ENCODE measurements at regions of chr6 and their contacts with region 1.

Region 1: DNA sequence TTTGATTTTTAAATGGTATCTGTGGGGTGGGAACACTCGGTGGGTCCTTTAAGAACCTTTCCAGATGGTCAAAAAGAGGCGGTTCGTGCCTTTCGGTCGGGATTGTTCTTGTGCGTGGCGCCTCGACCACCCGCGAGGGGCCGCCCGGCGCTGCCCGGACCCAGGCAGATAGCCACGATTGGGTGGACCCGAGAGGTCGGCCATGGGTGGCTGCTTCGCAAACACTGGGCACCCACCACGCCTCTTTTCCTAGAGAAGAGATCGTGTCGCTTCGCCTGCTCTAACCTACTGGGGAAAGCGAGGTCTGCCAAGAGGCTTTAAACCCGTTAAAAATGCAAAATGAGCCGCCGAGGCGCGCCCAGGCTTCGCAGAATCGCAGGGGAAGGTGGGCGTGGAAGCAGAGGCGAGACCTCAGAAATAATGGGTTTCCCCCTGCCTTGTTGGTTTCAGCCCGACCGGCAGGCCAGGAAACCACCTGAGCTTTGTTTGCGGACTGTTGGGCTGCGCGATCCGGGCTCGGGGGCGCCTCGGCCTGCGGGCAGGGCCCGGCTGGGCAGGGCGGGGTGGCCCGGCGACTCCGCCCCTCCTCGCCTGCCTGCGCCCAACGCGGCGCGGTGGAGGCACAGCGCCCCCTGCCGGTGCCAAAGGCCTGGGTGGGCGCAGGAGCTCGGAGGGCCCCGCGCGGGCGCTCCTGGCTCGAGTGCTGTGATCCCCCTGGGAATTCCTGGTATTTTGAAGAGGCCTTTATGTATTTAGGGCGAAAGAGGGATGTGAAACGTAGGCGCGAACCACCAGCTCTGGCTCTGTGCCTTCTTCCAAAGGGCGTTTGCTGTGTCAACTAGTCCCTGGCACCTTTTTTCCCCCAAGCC is 1.6 kb downstream of the MARCKS start:
- DNase-seq: peak; percentile 95
- H3K4me3 ChIP-seq: peak overlapping the region; percentile 98 to 99 (median 99)
- H3K27ac ChIP-seq: peak overlapping the region; percentile 99
- H3K4me1 ChIP-seq: peaks cover 16% of the 10 kb centered on the region
- H3K27me3 ChIP-seq: no peaks in the 10 kb centered on the region
- CTCF ChIP-seq: peak; percentile 43 to 84

Region 2: GRCh38 chr6:112710706-112711105 is 1148.0 kb before region 1 on chr6:
- CTCF ChIA-PET with region 1: no interaction called
- dilution Hi-C with region 1: no loop called
- in situ Hi-C with region 1: no loop called
- intact Hi-C with region 1: no loop called
- DNase-seq: peak; percentile 30
- H3K4me3 ChIP-seq: no peak overlapping the region
- H3K27ac ChIP-seq: no peak overlapping the region
- H3K4me1 ChIP-seq: no peaks in the 10 kb centered on the region
- H3K27me3 ChIP-seq: no peaks in the 10 kb centered on the region
- CTCF ChIP-seq: no peak

Region 3: GRCh38 chr6:113306552-113307145 is 552.1 kb before region 1 on chr6:
- CTCF ChIA-PET with region 1: interaction called, 5 read pairs
- dilution Hi-C with region 1: no loop called
- in situ Hi-C with region 1: no loop called
- intact Hi-C with region 1: loop called (anchors 1 kb)
- DNase-seq: peak; percentile 62
- H3K4me3 ChIP-seq: no peak overlapping the region
- H3K27ac ChIP-seq: no peak overlapping the region
- H3K4me1 ChIP-seq: no peaks in the 10 kb centered on the region
- H3K27me3 ChIP-seq: no peaks in the 10 kb centered on the region
- CTCF ChIP-seq: peak; percentile 47 to 68

Region 4: GRCh38 chr6:113495506-113495905 is 363.2 kb before region 1 on chr6:
- CTCF ChIA-PET with region 1: no interaction called
- dilution Hi-C with region 1: no loop called
- in situ Hi-C with region 1: no loop called
- intact Hi-C with region 1: loop called (anchors 2 kb)
- DNase-seq: peak; percentile 44
- H3K4me3 ChIP-seq: no peak overlapping the region
- H3K27ac ChIP-seq: no peak overlapping the region
- H3K4me1 ChIP-seq: peaks cover 6% of the 10 kb centered on the region
- H3K27me3 ChIP-seq: no peaks in the 10 kb centered on the region
- CTCF ChIP-seq: no peak

Region 5: DNA sequence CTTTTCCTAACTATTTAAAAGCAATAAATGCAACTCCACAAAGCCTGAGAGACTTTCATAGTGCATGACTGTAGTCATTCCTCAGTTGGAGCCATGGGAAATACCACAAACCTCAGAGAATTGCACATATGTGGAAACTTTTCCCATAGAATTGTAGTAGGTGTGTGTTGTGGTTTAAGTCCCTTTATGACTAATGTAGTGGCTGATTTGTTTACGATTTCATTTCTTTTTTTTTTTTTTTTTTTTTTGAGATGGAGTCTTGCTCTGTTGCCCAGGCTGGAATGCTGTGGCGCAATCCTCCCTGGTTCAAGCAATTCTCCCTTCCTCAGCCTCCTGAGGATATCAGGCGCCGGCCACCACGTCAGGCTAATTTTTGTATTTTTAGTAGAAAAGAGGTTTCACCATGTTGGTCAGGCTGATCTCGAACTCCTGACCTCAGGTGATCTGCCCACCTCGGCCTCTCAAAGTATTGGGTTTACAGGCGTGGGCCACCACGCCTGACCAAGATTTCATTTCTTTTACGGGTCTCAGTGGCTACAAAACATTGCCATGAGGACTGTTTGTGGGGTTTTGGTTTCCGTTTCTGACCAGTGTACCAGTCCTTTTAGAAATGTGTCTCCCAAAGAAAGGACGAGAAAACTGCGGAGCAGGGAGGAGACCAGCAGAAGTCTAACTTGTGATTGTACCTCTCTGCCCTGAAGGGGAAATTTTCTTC is 213.7 kb before region 1 on chr6:
- CTCF ChIA-PET with region 1: interaction called, 3 read pairs
- dilution Hi-C with region 1: no loop called
- in situ Hi-C with region 1: no loop called
- intact Hi-C with region 1: loop called (anchors 1 kb)
- DNase-seq: peak; percentile 97
- H3K4me3 ChIP-seq: no peak overlapping the region
- H3K27ac ChIP-seq: peak overlapping the region; percentile 86
- H3K4me1 ChIP-seq: peaks cover 25% of the 10 kb centered on the region
- H3K27me3 ChIP-seq: peaks cover 3% of the 10 kb centered on the region
- CTCF ChIP-seq: no peak

Region 6: GRCh38 chr6:113697632-113698410 is 160.9 kb before region 1 on chr6:
- CTCF ChIA-PET with region 1: no interaction called
- dilution Hi-C with region 1: no loop called
- in situ Hi-C with region 1: loop called (anchors 5 to 10 kb)
- intact Hi-C with region 1: no loop called
- DNase-seq: peak; percentile 89
- H3K4me3 ChIP-seq: no peak overlapping the region
- H3K27ac ChIP-seq: no peak overlapping the region
- H3K4me1 ChIP-seq: peaks cover 30% of the 10 kb centered on the region
- H3K27me3 ChIP-seq: no peaks in the 10 kb centered on the region
- CTCF ChIP-seq: no peak

Measured in mammary epithelial cell (primary cell).